ENCODE measurements at regions of chr20 and their contacts with region 1.

Region 1: GRCh38 chr20:36205026-36205425 is 31.3 kb upstream of the AAR2 start:
- DNase-seq: no peak
- H3K4me3 ChIP-seq: no peak overlapping the region
- H3K27ac ChIP-seq: no peak overlapping the region
- H3K4me1 ChIP-seq: peaks cover 0 to 6% of the 10 kb centered on the region in 2 donors
- H3K27me3 ChIP-seq: no peaks in the 10 kb centered on the region
- CTCF ChIP-seq: no peak
- POLR2A ChIP-seq: no peak

Region 2: DNA sequence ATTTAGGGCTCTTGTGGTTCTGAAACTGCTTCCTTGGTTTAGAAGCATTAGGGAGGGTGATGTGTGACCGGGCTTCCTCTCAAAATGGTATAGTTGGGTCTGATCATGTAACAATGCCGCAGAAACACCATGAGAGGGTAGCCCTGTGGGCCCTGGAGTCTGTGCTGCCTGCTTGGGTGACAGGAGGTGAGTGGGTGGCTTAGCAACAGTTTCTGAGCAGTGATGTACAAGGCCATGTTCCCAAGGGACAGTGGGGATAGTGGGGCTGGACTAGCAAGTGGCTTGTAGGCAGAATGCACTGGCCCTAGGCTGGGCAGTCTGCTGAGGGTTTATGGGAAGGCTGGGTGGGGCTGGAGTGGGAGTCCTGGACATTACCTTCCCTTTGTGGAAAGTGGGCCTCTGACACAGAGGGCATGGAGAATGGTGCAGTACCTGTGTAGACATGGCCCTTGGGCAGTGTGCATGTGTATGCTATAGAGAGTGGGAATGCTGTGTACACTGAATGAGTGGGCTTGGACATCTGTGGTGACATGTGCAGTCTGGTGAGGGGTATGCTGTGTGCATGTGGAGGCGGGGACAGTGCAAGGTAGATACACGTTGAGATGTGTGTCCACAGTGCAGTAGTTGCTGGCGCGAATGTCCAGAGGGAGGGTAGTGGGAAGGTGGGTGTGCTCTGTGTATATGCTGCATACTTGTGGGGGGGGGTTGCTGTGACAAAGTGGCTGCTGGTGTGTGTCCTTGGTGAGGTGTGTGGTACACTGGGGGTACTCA is 229.5 kb after region 1 on chr20:
- intact Hi-C with region 1: loop called (anchors 5 kb)
- DNase-seq: no peak
- H3K4me3 ChIP-seq: no peak overlapping the region
- H3K27ac ChIP-seq: no peak overlapping the region
- H3K4me1 ChIP-seq: peaks cover 0 to 5% of the 10 kb centered on the region in 2 donors
- H3K27me3 ChIP-seq: no peaks in the 10 kb centered on the region
- CTCF ChIP-seq: no peak
- POLR2A ChIP-seq: no peak

Measured in thyroid gland (tissue), 4 donors.